ENCODE measurements at regions of chr21 and their contacts with region 1.

Region 1: DNA sequence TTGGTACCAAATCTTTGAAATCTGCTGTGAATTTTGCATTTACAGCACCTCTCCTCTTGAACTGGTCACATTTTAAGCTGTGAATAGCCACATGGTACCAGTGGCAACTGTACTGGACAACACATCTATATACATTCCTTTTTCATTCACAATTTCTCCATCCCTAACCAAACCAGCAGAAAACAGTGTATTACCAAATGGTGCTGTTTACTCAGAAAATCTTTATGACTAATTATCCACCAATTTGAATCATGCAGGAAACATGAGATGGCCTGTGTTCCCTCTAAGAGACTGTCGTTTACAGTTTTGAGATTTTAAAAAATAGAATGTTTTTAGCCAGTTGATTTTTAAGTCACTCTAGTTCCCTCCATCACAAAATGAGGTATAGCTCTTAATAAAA is 17.6 kb upstream of the CCT8 start:
- DNase-seq: no peak
- ATAC-seq: no peak
- H3K4me3 ChIP-seq: no peak overlapping the region
- H3K27ac ChIP-seq: no peak overlapping the region
- H3K4me1 ChIP-seq: peaks cover 14% of the 10 kb centered on the region
- H3K27me3 ChIP-seq: no peaks in the 10 kb centered on the region
- CTCF ChIP-seq: no peak

Region 2: GRCh38 chr21:28856588-28857250 is 234.3 kb before region 1 on chr21:
- intact Hi-C with region 1: no loop called
- DNase-seq: no peak
- ATAC-seq: no peak
- H3K4me3 ChIP-seq: no peak overlapping the region
- H3K27ac ChIP-seq: no peak overlapping the region
- H3K4me1 ChIP-seq: no peaks in the 10 kb centered on the region
- H3K27me3 ChIP-seq: no peaks in the 10 kb centered on the region
- CTCF ChIP-seq: no peak

Region 3: DNA sequence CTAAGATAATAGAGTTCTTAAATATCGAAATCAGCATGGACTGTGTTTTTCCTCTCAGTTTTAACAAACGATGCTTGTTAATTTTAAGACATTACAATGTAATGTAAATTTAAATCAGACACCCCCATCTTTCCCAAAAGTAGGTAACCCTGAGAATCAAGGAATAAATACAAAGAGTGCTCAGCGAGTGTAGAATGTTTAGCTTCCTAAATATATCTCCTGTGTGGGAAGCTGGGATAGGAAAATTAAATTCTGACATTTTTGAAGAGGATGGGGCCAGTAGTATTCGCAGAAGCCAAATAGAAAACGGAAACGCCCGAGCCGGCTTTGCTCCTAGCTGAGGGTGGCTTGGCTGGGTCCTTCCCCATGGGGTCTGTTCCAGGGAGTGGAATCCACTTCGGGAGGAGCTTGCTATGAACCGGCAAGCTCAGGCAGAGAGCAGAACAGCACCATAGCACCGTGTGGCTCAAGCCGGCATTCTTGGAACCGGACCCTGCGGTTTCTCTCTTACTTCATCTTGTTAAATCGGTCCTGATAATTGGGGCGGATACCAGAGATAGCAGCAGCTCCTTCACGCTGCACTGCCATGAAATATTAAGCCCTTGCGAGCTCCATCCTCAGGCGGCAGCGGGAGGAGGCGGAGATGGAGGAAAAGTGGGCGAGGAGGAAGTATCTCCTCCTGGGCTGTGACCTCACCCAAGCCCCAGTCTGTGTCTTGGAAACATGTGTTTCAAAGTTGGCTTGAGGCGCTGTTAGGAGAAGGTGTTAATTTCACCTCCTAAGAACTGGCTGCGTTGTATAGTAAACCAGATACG is 64.3 kb after region 1 on chr21:
- intact Hi-C with region 1: loop called in 1 of 2 experiments (anchors 5 kb)
- DNase-seq: peak; percentile 63 to 82
- ATAC-seq: peak; percentile 87 to 90 (median 88)
- H3K4me3 ChIP-seq: peak overlapping the region; percentile 34
- H3K27ac ChIP-seq: peak overlapping the region; percentile 87
- H3K4me1 ChIP-seq: peaks cover 58% of the 10 kb centered on the region
- H3K27me3 ChIP-seq: no peaks in the 10 kb centered on the region
- CTCF ChIP-seq: no peak

Region 4: DNA sequence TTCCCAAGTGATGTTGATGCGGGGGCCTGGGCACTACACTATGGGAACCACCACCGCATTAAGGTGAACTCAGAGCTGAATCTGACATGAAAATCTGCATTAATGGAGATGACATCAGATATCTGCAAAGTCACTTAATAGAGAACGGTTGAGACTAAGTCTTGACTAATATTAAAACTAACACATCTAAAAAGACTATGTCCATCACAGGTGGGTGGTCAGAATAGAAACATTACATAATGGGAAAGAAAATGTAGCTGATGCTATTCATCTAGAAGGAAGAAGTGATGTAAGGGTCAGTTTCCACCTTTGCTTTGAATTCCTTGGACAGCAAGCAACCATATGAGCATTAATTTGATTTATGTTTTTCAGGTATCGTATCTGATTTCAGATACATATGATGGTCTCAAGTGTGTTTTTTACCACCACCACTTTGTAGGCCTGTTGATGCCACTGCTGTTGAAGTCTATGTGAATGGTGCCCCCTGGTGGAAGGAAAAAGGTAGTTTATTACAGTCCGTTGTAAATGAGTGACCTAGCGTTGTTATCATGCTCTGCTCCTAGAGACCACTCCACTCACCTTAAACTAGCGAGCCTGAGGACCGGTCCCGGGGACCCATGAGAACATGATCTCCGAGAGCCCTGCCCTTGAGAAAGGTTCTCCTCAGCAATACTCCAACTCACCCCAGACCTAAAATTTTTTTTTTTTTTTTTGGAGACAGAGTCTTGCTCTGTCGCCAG is 281.2 kb after region 1 on chr21:
- intact Hi-C with region 1: loop called (anchors 2 to 5 kb)
- DNase-seq: no peak
- ATAC-seq: peak; percentile 81 to 93 (median 86)
- H3K4me3 ChIP-seq: no peak overlapping the region
- H3K27ac ChIP-seq: peak overlapping the region; percentile 46
- H3K4me1 ChIP-seq: peaks cover 10% of the 10 kb centered on the region
- H3K27me3 ChIP-seq: no peaks in the 10 kb centered on the region
- CTCF ChIP-seq: peak; percentile 83

Measured in psoas muscle (tissue), 8 donors.